ENCODE measurements at regions of chr2 and their contacts with region 1.

Region 1: DNA sequence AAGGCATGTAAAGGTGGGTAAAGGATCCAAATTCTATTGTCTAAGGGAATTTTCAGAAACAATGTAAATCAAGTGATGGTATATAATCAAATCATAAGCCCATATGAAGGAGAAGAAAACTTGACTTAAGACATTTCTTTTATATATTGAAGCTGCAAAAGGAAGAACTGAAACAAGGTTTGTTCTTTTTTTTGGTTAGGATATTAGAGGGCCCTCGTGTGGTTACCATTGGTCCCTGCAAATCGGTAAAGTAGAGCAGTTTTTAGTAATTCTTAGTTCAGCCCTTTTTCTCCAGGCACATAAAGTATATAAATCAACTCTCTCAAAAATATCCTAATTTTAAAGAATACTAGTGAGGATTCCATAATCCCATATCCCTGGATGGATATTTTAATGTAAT is 105.6 kb upstream of the STK17B start:
- DNase-seq: no peak
- ATAC-seq: no peak
- H3K4me3 ChIP-seq: no peak overlapping the region
- H3K27ac ChIP-seq: no peak overlapping the region; a peak in 1 of 6 replicates
- H3K4me1 ChIP-seq: peaks cover 37% of the 10 kb centered on the region
- CTCF ChIP-seq: peak; percentile 48
- EP300 ChIP-seq: no peak
- POLR2A ChIP-seq: no peak
- RAD21 ChIP-seq: peak; percentile 46 to 52; a peak in 4 of 5 replicates

Region 2: GRCh38 chr2:196076778-196077568 is 200.0 kb before region 1 on chr2:
- CTCF ChIA-PET with region 1: interaction called, 49 read pairs
- POLR2A ChIA-PET with region 1: no interaction called
- DNase-seq: no peak
- ATAC-seq: no peak
- H3K4me3 ChIP-seq: no peak overlapping the region
- H3K27ac ChIP-seq: no peak overlapping the region
- H3K4me1 ChIP-seq: no peaks in the 10 kb centered on the region; the same call in 2 of the 3 replicates
- CTCF ChIP-seq: no peak
- EP300 ChIP-seq: no peak
- POLR2A ChIP-seq: no peak
- RAD21 ChIP-seq: no peak

Region 3: DNA sequence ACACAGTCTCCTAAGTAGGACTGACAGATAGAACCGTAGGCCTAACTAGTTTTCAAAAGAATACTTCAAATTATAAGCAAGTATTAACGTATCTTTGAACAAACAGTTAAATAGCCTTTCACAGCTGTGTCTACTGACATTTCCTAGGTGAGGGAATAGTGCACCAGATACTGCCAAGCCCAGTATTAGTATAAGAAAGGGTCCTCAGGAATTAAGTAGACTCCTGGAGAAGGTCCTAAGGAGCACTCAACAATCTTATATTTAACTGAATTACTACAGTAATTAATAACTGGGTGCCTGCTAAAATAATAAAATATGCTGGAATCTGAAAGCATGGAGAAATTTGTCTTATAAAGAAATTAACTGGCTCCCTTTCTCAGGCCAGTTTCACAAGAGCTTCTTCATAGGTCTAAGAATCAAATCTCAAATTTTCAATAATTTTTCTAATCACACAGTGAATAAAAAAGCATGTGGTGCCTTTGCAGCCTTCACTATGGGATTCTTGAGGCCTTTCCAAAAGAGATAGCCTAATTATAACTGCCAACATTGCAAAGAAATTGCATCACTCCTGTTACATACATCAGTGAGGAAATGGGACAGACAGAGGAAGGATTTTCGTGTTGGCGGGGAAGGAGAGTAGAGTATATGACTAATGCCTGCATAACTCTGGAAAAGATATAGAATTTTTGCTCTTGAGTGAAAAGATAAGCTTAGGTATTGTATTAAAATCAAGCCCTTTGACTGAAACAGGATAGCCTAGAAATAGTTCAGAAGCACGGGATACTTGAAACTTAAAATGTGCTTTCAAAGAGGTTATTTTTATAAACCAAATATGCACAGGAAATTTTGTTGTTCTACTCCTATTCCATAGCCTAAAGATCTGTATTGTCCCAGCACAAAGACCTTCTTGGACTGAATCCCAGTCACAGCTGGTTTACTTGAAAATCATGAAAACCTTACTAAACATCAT is 123.0 kb after region 1 on chr2:
- CTCF ChIA-PET with region 1: no interaction called
- POLR2A ChIA-PET with region 1: no interaction called
- DNase-seq: peak; percentile 25 to 76
- ATAC-seq: peak; percentile 94 to 95
- H3K4me3 ChIP-seq: no peak overlapping the region
- H3K27ac ChIP-seq: peak overlapping the region; percentile 84 to 87
- H3K4me1 ChIP-seq: peaks cover 43% of the 10 kb centered on the region
- CTCF ChIP-seq: no peak
- EP300 ChIP-seq: peak; percentile 52 to 71; a peak in 2 of 5 replicates
- POLR2A ChIP-seq: no peak
- RAD21 ChIP-seq: 0 out of 5 replicates have a peak, but pooled peaks have one; percentile 8 to 21